ENCODE measurements at regions of chr20 and their contacts with region 1.

Region 1: GRCh38 chr20:63785691-63786131 is 45.4 kb downstream of the ZBTB46 start:
- DNase-seq: no peak
- H3K4me3 Mint-ChIP-seq: no peak overlapping the region
- H3K27ac Mint-ChIP-seq: no peak overlapping the region
- H3K4me1 Mint-ChIP-seq: peaks cover 7% of the 10 kb centered on the region
- H3K27me3 Mint-ChIP-seq: peaks cover 8% of the 10 kb centered on the region

Region 2: GRCh38 chr20:63973636-63974402 is 188.1 kb after region 1 on chr20:
- intact Hi-C with region 1: loop called (anchors 5 kb)
- DNase-seq: peak; percentile 70
- H3K4me3 Mint-ChIP-seq: no peak overlapping the region
- H3K27ac Mint-ChIP-seq: peak overlapping the region; percentile 71
- H3K4me1 Mint-ChIP-seq: peaks cover 46% of the 10 kb centered on the region
- H3K27me3 Mint-ChIP-seq: peaks cover 2% of the 10 kb centered on the region

Measured in activated T-helper 1 cell treated with anti-CD3 and anti-CD28 coated beads, Interleukin-12 subunit alpha, Interleukin-12 subunit beta, Interleukin-2, Interleukin-4 antibody, amounts not matched to agents 30 ng/mL and 10 ng/mL and 1 ng/mL, durations not matched to agents 14 hours and 24 hours and 36 hours (primary cell).